HepG2 (cell line): ENCODE measurements at regions of chr3 and their contacts with region 1.

Region 1: GRCh38 chr3:71583566-71584449 is at the start of gene FOXP1:
- DNase-seq: peak; percentile 66
- ATAC-seq: peak; percentile 53
- H3K4me3 ChIP-seq: peak within 1 kb of the TSS; percentile 91 to 97 (median 95)
- H3K27ac ChIP-seq: peak within 1 kb of the TSS; percentile 97
- H3K4me1 ChIP-seq: peaks cover 40% of the 10 kb centered on the region
- H3K27me3 ChIP-seq: no peaks in the 10 kb centered on the region
- CTCF ChIP-seq: no peak
- EP300 ChIP-seq: no peak
- POLR2A ChIP-seq: peak in 1 of 2 experiments; percentile 44; a peak in 1 of 4 replicates
- RAD21 ChIP-seq: no peak
- total RNA-seq, gene FOXP1: 43.3 and 59.0 TPM in 2 replicates

Region 2: GRCh38 chr3:71006810-71007785 is 576.7 kb before region 1 on chr3:
- CTCF ChIA-PET with region 1: no interaction called
- POLR2A ChIA-PET with region 1: interaction called, 3 read pairs
- in situ Hi-C with region 1: no loop called
- intact Hi-C with region 1: loop called (anchors 1 kb)
- DNase-seq: peak; percentile 20
- ATAC-seq: peak; percentile 75
- H3K4me3 ChIP-seq: no peak overlapping the region
- H3K27ac ChIP-seq: no peak overlapping the region
- H3K4me1 ChIP-seq: peaks cover 49% of the 10 kb centered on the region
- H3K27me3 ChIP-seq: no peaks in the 10 kb centered on the region
- CTCF ChIP-seq: peak; percentile 53
- EP300 ChIP-seq: no peak
- POLR2A ChIP-seq: no peak
- RAD21 ChIP-seq: peak; percentile 33; the same call in 1 of the 2 replicates

Region 3: GRCh38 chr3:71069797-71070196 is 514.0 kb before region 1 on chr3:
- CTCF ChIA-PET with region 1: no interaction called
- POLR2A ChIA-PET with region 1: interaction called, 7 read pairs
- in situ Hi-C with region 1: no loop called
- intact Hi-C with region 1: loop called (anchors 5 kb)
- DNase-seq: peak; percentile 64
- ATAC-seq: peak; percentile 58
- H3K4me3 ChIP-seq: no peak overlapping the region
- H3K27ac ChIP-seq: no peak overlapping the region
- H3K4me1 ChIP-seq: peaks cover 47% of the 10 kb centered on the region
- H3K27me3 ChIP-seq: no peaks in the 10 kb centered on the region; a peak in 1 of 5 replicates
- CTCF ChIP-seq: peak; percentile 59
- EP300 ChIP-seq: no peak
- POLR2A ChIP-seq: no peak
- RAD21 ChIP-seq: peak; percentile 50; the same call in 1 of the 2 replicates

Region 4: GRCh38 chr3:71258116-71258515 is 325.7 kb before region 1 on chr3:
- CTCF ChIA-PET with region 1: no interaction called
- POLR2A ChIA-PET with region 1: interaction called, 4 read pairs
- in situ Hi-C with region 1: no loop called
- intact Hi-C with region 1: loop called (anchors 2 kb)
- DNase-seq: peak; percentile 70
- ATAC-seq: peak; percentile 68
- H3K4me3 ChIP-seq: no peak overlapping the region
- H3K27ac ChIP-seq: peak overlapping the region; percentile 59
- H3K4me1 ChIP-seq: peaks cover 83% of the 10 kb centered on the region
- H3K27me3 ChIP-seq: no peaks in the 10 kb centered on the region
- CTCF ChIP-seq: no peak
- EP300 ChIP-seq: no peak
- POLR2A ChIP-seq: no peak
- RAD21 ChIP-seq: no peak

Region 5: DNA sequence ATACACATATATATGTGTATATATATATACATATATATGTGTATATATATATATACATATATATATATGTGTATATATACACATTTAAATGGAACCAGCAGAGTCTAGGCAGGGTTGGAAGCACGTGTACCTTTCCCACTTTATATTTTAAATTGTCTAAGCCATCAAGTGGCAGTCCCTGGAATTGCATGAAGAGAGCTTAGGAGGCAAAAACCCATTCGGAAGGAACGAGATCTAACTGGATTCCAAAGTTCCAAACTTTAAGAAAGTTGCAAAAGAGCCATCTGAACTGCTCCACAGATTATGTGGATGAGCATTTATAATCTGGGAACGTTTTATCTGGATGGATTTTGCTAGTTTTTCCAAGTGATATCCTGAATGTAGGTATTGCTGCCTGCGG is 186.8 kb before region 1 on chr3:
- CTCF ChIA-PET with region 1: no interaction called
- POLR2A ChIA-PET with region 1: interaction called, 4 read pairs
- in situ Hi-C with region 1: no loop called
- intact Hi-C with region 1: loop called (anchors 5 kb)
- DNase-seq: peak; percentile 15
- ATAC-seq: peak; percentile 31; the same call in 1 of the 3 replicates
- H3K4me3 ChIP-seq: no peak overlapping the region
- H3K27ac ChIP-seq: no peak overlapping the region
- H3K4me1 ChIP-seq: peaks cover 50% of the 10 kb centered on the region
- H3K27me3 ChIP-seq: no peaks in the 10 kb centered on the region
- CTCF ChIP-seq: peak; percentile 49
- EP300 ChIP-seq: no peak
- POLR2A ChIP-seq: no peak
- RAD21 ChIP-seq: no peak

Region 6: DNA sequence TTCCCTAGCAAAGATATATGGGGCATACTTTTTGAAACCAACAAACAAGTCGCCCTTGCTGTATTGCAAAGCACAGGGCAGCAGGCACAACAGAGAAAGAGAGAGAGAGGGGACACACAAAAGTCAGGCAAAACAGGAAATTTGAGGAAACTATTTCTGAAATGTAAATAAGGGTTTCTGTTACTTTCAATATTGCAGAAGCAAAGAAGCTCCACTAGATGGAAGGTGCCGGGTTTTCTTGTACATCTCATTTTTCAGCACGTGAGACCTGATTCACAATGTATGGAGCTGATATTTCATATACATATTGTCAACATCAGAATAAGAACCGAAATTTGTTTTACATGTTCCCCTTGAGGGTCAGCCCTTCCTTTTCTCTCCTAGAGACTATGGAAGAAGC is 127.7 kb before region 1 on chr3:
- CTCF ChIA-PET with region 1: no interaction called
- POLR2A ChIA-PET with region 1: interaction called, 3 read pairs
- in situ Hi-C with region 1: no loop called
- intact Hi-C with region 1: loop called (anchors 10 kb)
- DNase-seq: no peak
- ATAC-seq: no peak
- H3K4me3 ChIP-seq: no peak overlapping the region
- H3K27ac ChIP-seq: no peak overlapping the region
- H3K4me1 ChIP-seq: peaks cover 56% of the 10 kb centered on the region
- H3K27me3 ChIP-seq: no peaks in the 10 kb centered on the region
- CTCF ChIP-seq: no peak
- EP300 ChIP-seq: no peak
- POLR2A ChIP-seq: no peak
- RAD21 ChIP-seq: no peak